ENCODE measurements at regions of chr14 and their contacts with region 1.

Region 1: GRCh38 chr14:93206793-93207467 is at the starts of genes GON7 and UBR7:
- DNase-seq: peak; percentile 86
- ATAC-seq: peak; percentile 89
- H3K4me3 ChIP-seq: peak within 1 kb of the TSS; percentile 76
- H3K27ac ChIP-seq: peak within 1 kb of the TSS; percentile 86
- H3K4me1 ChIP-seq: peaks cover 15% of the 10 kb centered on the region
- H3K27me3 ChIP-seq: no peaks in the 10 kb centered on the region
- CTCF ChIP-seq: peak in 2 of 3 experiments; percentile 16 to 20; a peak in 2 of 6 replicates
- EP300 ChIP-seq: 0 out of 4 replicates have a peak, but pooled peaks of 1 of the 2 experiments have one; percentile 21
- POLR2A ChIP-seq: peak; percentile 92
- RAD21 ChIP-seq: 0 out of 2 replicates have a peak, but pooled peaks have one; percentile 13
- polyA plus RNA-seq, gene GON7: 25.9 to 31.2 TPM
- polyA plus RNA-seq, gene UBR7: 14.3 to 20.8 TPM

Region 2: DNA sequence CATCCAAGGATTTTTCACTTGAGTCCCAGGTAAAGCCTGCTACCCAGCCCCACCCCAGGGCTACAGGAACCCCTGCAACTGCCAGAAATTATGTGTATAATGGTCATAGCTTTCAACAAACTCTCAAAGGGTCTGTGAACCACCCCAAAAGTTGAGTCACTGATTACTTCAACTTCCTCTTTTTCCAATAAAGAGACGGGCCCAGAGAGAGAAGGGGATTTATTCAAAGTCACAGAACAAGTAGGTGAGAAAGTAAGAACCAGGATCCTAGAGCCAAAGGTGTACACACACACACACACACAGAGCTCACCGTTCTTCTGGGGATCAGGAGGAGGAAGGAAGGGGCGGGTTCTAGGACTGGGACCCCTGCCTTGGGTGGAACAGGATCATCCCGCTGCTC is 86.4 kb before region 1 on chr14:
- CTCF ChIA-PET with region 1: interaction called, 48 read pairs
- POLR2A ChIA-PET with region 1: no interaction called
- RAD21 ChIA-PET with region 1: interaction called, 55 read pairs
- SMC1A ChIA-PET with region 1: interaction called, 10 read pairs
- in situ Hi-C with region 1: no loop called
- intact Hi-C with region 1: loop called (anchors 5 kb)
- DNase-seq: no peak
- ATAC-seq: peak; percentile 24
- H3K4me3 ChIP-seq: no peak overlapping the region
- H3K27ac ChIP-seq: no peak overlapping the region
- H3K4me1 ChIP-seq: no peaks in the 10 kb centered on the region
- H3K27me3 ChIP-seq: no peaks in the 10 kb centered on the region
- CTCF ChIP-seq: no peak
- EP300 ChIP-seq: no peak
- POLR2A ChIP-seq: no peak
- RAD21 ChIP-seq: no peak

Region 3: DNA sequence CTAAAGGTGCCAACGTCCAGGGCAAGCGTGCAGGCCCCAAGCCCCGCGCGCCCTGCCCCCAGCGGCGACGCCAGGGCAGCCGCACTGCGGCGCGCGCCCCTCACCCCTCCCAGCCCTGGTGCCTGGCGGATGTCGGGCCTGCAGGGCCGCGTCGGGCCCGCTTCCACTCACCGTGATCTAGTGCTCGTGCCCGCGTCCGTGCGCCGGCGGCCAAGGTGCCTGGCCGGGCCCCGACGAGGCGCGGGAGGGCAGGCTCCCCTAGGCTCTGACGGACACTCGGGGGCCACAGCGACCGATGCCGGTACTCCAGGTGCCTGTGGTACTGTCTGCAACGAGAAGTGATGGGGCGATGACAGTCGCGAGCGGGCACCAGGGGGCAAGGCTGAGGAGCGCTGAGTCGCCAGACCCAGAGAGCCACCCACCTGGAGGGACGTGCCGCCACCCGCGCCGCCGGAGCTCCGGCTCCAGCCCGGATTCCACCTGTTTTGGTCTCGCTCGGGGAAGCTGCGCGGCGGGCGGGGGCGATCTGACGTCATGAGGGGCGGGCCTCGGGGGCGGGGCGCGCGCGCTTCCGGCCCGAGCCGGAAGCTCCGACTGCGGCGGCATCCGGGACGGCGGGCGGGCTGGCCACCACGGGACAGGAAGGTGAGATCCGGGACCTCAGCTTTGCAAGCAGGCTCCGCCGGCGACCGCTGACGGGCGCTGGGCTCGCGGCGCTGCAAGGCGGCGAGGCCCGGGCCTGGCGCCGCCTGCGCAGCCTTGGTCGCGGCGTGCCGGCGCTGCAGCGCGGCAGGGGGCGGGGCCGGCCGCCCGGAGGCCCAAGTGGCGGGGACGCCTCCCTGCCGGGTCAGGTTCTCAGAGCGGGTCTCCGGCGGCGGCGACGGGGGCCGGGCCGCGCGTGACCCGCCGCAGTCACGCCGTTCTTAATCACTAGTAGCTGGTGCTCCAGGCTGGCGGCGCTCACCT is 22.3 kb before region 1 on chr14 and contains the starts of genes LYSET and MOAP1:
- CTCF ChIA-PET with region 1: interaction called, 48 read pairs
- POLR2A ChIA-PET with region 1: interaction called, 38 read pairs
- RAD21 ChIA-PET with region 1: interaction called, 51 read pairs
- SMC1A ChIA-PET with region 1: interaction called, 29 read pairs
- in situ Hi-C with region 1: no loop called
- intact Hi-C with region 1: loop called (anchors 1 kb)
- DNase-seq: no peak
- ATAC-seq: peak; percentile 92
- H3K4me3 ChIP-seq: peak within 1 kb of the TSS; percentile 88
- H3K27ac ChIP-seq: peak within 1 kb of the TSS; percentile 92
- H3K4me1 ChIP-seq: peaks cover 9% of the 10 kb centered on the region
- H3K27me3 ChIP-seq: no peaks in the 10 kb centered on the region
- CTCF ChIP-seq: peak; percentile 14 to 25 (median 25); a peak in 4 of 6 replicates
- EP300 ChIP-seq: no peak
- POLR2A ChIP-seq: peak; percentile 88
- RAD21 ChIP-seq: 0 out of 2 replicates have a peak, but pooled peaks have one; percentile 24
- polyA plus RNA-seq, gene LYSET: 33.4 to 34.5 TPM
- polyA plus RNA-seq, gene MOAP1: 3.1 to 5.2 TPM

Region 4: GRCh38 chr14:93219103-93219726 is 12.3 kb after region 1 on chr14:
- CTCF ChIA-PET with region 1: interaction called, 16 read pairs
- POLR2A ChIA-PET with region 1: no interaction called
- RAD21 ChIA-PET with region 1: interaction called, 35 read pairs
- SMC1A ChIA-PET with region 1: interaction called, 7 read pairs
- in situ Hi-C with region 1: no loop called
- intact Hi-C with region 1: no loop called
- DNase-seq: no peak
- ATAC-seq: peak; percentile 98
- H3K4me3 ChIP-seq: no peak overlapping the region
- H3K27ac ChIP-seq: no peak overlapping the region
- H3K4me1 ChIP-seq: no peaks in the 10 kb centered on the region
- H3K27me3 ChIP-seq: no peaks in the 10 kb centered on the region
- CTCF ChIP-seq: peak; percentile 74 to 87 (median 75)
- EP300 ChIP-seq: no peak
- POLR2A ChIP-seq: no peak
- RAD21 ChIP-seq: peak; percentile 84

Region 5: DNA sequence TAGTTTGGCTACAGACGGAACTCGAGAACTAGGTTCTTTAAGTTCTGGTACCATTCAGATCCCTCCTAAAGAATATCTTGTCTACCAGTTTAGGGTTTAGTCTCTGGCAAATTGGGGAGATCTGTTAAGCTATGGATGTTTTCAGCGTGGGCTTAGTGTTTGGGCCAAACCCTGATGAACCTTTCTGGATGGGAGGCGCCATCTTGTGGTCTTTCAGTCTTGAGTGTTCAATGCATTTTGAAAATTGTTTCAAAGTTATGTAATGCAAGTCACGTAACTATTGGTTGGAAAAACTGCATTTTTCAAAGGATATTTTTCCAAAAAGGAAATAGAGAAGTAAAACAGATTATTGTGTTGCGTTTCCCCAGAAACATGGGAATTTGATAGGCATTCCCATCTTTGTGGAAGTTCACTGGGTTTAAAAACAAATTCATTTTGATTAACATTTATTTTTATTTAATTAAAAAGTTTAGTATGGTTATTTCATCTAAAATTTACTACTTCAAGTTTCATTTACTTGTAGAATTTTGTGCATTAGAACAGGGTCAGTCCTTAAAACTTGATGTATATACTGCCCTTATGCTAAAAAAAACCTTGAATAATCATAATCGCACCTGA is 412.4 kb after region 1 on chr14:
- CTCF ChIA-PET with region 1: interaction called, 12 read pairs
- POLR2A ChIA-PET with region 1: interaction called, 5 read pairs
- RAD21 ChIA-PET with region 1: interaction called, 10 read pairs
- SMC1A ChIA-PET with region 1: interaction called, 3 read pairs
- in situ Hi-C with region 1: no loop called
- intact Hi-C with region 1: no loop called
- DNase-seq: peak; percentile 5
- ATAC-seq: peak; percentile 81
- H3K4me3 ChIP-seq: no peak overlapping the region
- H3K27ac ChIP-seq: no peak overlapping the region
- H3K4me1 ChIP-seq: no peaks in the 10 kb centered on the region
- H3K27me3 ChIP-seq: peaks cover 0 to 3% of the 10 kb centered on the region in 2 experiments; a peak in 2 of 4 replicates
- CTCF ChIP-seq: peak; percentile 61 to 80 (median 67)
- EP300 ChIP-seq: no peak
- POLR2A ChIP-seq: no peak
- RAD21 ChIP-seq: peak; percentile 83